Uterus (tissue), 4 donors: ENCODE measurements at regions of chr21 and their contacts with region 1.

Region 1: GRCh38 chr21:28745131-28746016 is 247.3 kb downstream of the LTN1 start:
- DNase-seq: peak; percentile 73 to 80
- H3K4me3 ChIP-seq: peak overlapping the region; percentile 30 to 48
- H3K27ac ChIP-seq: peak overlapping the region; percentile 85 to 90
- H3K4me1 ChIP-seq: no peaks in the 10 kb centered on the region
- H3K27me3 ChIP-seq: no peaks in the 10 kb centered on the region
- CTCF ChIP-seq: peak; percentile 90 to 99 (median 97)
- POLR2A ChIP-seq: no peak

Region 2: GRCh38 chr21:26842976-26843932 is 1902.1 kb before region 1 on chr21:
- intact Hi-C with region 1: loop called (anchors 10 kb)
- DNase-seq: peak; percentile 95 to 96
- H3K4me3 ChIP-seq: peak overlapping the region; percentile 69 to 89
- H3K27ac ChIP-seq: peak overlapping the region; percentile 99
- H3K4me1 ChIP-seq: peaks cover 4 to 5% of the 10 kb centered on the region in 2 donors
- H3K27me3 ChIP-seq: no peaks in the 10 kb centered on the region
- CTCF ChIP-seq: peak; percentile 19 to 43 (median 30)
- POLR2A ChIP-seq: peak; percentile 33 to 52

Region 3: GRCh38 chr21:28489162-28489561 is 256.2 kb before region 1 on chr21:
- intact Hi-C with region 1: no loop called
- DNase-seq: no peak
- H3K4me3 ChIP-seq: no peak overlapping the region
- H3K27ac ChIP-seq: peak overlapping the region; percentile 28 to 34
- H3K4me1 ChIP-seq: no peaks in the 10 kb centered on the region
- H3K27me3 ChIP-seq: no peaks in the 10 kb centered on the region
- CTCF ChIP-seq: no peak
- POLR2A ChIP-seq: no peak